ENCODE measurements at regions of chr12 and their contacts with region 1.

Region 1: GRCh38 chr12:56299853-56300643 is at the start of gene CS:
- DNase-seq: peak; percentile 99
- H3K4me3 Mint-ChIP-seq: peak within 1 kb of the TSS; percentile 98
- H3K27ac Mint-ChIP-seq: peak within 1 kb of the TSS; percentile 98
- H3K4me1 Mint-ChIP-seq: peaks cover 46% of the 10 kb centered on the region
- H3K27me3 Mint-ChIP-seq: no peaks in the 10 kb centered on the region
- total RNA-seq, gene CS: 304 to 309 TPM

Region 2: GRCh38 chr12:56127888-56128669 is 172.0 kb before region 1 on chr12 and contains the start of gene ESYT1:
- CTCF ChIA-PET with region 1: no interaction called
- POLR2A ChIA-PET with region 1: no interaction called
- intact Hi-C with region 1: loop called (anchors 1 kb)
- DNase-seq: peak; percentile 99
- H3K4me3 Mint-ChIP-seq: peak within 1 kb of the TSS; percentile 97
- H3K27ac Mint-ChIP-seq: peak within 1 kb of the TSS; percentile 93
- H3K4me1 Mint-ChIP-seq: peaks cover 60% of the 10 kb centered on the region
- H3K27me3 Mint-ChIP-seq: no peaks in the 10 kb centered on the region
- total RNA-seq, gene ESYT1: 142 to 146 TPM

Region 3: GRCh38 chr12:56158029-56158925 is 141.8 kb before region 1 on chr12 and contains the start of gene MYL6:
- CTCF ChIA-PET with region 1: no interaction called
- POLR2A ChIA-PET with region 1: no interaction called
- intact Hi-C with region 1: loop called (anchors 2 kb)
- DNase-seq: peak; percentile 95
- H3K4me3 Mint-ChIP-seq: peak within 1 kb of the TSS; percentile 95
- H3K27ac Mint-ChIP-seq: peak within 1 kb of the TSS; percentile 98
- H3K4me1 Mint-ChIP-seq: peaks cover 42% of the 10 kb centered on the region
- H3K27me3 Mint-ChIP-seq: no peaks in the 10 kb centered on the region
- total RNA-seq, gene MYL6: 1,196 to 1,215 TPM

Region 4: DNA sequence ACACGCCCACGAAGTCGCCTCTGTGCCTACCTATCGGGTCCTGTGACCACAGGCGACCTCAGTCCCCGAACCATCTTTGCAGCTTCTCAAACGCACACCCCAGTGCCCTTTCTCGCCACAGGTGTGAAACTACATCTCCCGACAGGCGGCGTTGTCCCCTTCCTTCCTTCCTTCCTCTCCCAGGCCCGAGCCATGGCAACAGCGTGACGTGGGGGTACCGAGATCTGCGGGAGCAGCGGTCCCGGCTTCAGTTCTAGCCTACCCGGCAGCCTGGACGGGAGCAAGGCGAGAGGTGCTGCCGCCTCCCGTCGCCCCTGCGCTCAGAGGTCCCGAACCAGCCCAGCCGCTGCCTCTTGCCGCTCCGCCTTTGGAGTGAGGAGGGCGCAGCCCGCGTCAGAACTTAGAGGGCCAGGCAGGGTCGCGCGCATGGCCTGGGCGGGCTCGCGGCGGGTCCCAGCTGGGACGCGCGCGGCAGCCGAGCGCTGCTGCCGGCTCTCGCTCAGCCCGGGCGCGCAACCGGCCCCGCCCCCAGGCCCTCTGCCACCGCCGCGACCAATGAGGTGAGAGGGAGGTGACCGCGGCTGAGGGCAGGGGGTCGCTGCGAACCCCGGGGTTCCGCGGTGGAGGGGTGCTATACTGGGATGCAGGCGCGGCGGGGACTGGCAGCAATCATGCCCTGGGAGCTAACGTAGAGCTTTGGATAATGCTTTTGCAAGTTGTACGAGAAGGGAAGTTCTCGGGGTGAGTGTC is 33.2 kb before region 1 on chr12 and contains the start of gene COQ10A:
- CTCF ChIA-PET with region 1: interaction called, 6 read pairs
- POLR2A ChIA-PET with region 1: interaction called, 3 read pairs
- intact Hi-C with region 1: loop called (anchors 1 kb)
- DNase-seq: peak; percentile 91
- H3K4me3 Mint-ChIP-seq: peak within 1 kb of the TSS; percentile 88
- H3K27ac Mint-ChIP-seq: peak within 1 kb of the TSS; percentile 79
- H3K4me1 Mint-ChIP-seq: peaks cover 20% of the 10 kb centered on the region
- H3K27me3 Mint-ChIP-seq: no peaks in the 10 kb centered on the region
- total RNA-seq, gene COQ10A: 6.3 to 7.0 TPM

Region 5: GRCh38 chr12:56315622-56316473 is 15.8 kb after region 1 on chr12 and contains the start of gene CNPY2:
- CTCF ChIA-PET with region 1: interaction called, 4 read pairs
- POLR2A ChIA-PET with region 1: interaction called, 9 read pairs
- intact Hi-C with region 1: loop called (anchors 1 kb)
- DNase-seq: peak; percentile 95
- H3K4me3 Mint-ChIP-seq: peak within 1 kb of the TSS; percentile 98
- H3K27ac Mint-ChIP-seq: peak within 1 kb of the TSS; percentile 97
- H3K4me1 Mint-ChIP-seq: peaks cover 16% of the 10 kb centered on the region
- H3K27me3 Mint-ChIP-seq: no peaks in the 10 kb centered on the region
- total RNA-seq, gene CNPY2: 74.7 to 91.6 TPM

Region 6: GRCh38 chr12:56333679-56334489 is 33.8 kb after region 1 on chr12 and contains the start of gene PAN2:
- CTCF ChIA-PET with region 1: no interaction called
- POLR2A ChIA-PET with region 1: interaction called, 9 read pairs
- intact Hi-C with region 1: loop called (anchors 1 kb)
- DNase-seq: peak; percentile 97
- H3K4me3 Mint-ChIP-seq: peak within 1 kb of the TSS; percentile 94
- H3K27ac Mint-ChIP-seq: peak within 1 kb of the TSS; percentile 99
- H3K4me1 Mint-ChIP-seq: peaks cover 43% of the 10 kb centered on the region
- H3K27me3 Mint-ChIP-seq: no peaks in the 10 kb centered on the region
- total RNA-seq, gene PAN2: 49.0 to 51.2 TPM

Region 7: GRCh38 chr12:56541631-56542030 is 241.6 kb after region 1 on chr12:
- CTCF ChIA-PET with region 1: no interaction called
- POLR2A ChIA-PET with region 1: no interaction called
- intact Hi-C with region 1: no loop called
- DNase-seq: no peak
- H3K4me3 Mint-ChIP-seq: no peak overlapping the region
- H3K27ac Mint-ChIP-seq: no peak overlapping the region
- H3K4me1 Mint-ChIP-seq: no peaks in the 10 kb centered on the region
- H3K27me3 Mint-ChIP-seq: no peaks in the 10 kb centered on the region